ENCODE measurements at regions of chr10 and their contacts with region 1.

Region 1: DNA sequence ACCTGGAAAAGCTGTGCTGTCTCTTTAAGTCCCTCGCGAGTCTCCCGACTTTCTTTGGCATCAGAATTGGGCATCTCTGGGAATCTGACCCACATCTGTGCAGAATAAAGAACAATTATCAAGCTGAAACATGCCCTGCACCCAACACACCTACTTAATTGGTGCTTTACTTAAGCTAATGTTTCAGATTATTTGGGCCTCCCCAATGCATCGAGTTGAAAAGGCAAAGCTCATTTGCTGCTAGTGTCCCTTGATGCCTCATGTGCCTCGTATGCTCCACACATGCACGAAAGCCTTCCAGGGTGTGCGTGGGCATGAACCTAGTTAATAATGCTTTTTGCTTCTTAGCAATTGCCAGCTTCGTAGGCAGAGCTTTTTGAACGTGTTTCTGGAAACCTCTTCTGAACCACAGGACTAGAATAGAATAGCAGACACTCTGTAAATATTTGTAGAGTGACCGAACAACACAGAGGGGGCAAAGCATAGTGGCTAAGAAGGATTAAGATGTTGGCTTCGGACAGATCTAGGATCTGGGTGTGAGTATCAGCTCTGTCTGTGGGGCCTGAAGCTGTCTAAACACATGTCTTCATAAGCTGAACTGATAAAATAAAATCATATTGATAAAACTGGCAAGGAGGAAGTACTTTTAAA is 26.7 kb upstream of the FGFR2 start:
- DNase-seq: peak in 1 of 2 donors; percentile 31
- H3K4me3 ChIP-seq: no peak overlapping the region
- H3K27ac ChIP-seq: peak overlapping the region in 1 of 2 donors; percentile 38
- H3K4me1 ChIP-seq: no peaks in the 10 kb centered on the region
- H3K27me3 ChIP-seq: no peaks in the 10 kb centered on the region
- CTCF ChIP-seq: no peak
- POLR2A ChIP-seq: no peak

Region 2: GRCh38 chr10:121559326-121560026 is 65.5 kb before region 1 on chr10:
- intact Hi-C with region 1: loop called (anchors 2 kb)
- DNase-seq: no peak
- H3K4me3 ChIP-seq: no peak overlapping the region
- H3K27ac ChIP-seq: no peak overlapping the region
- H3K4me1 ChIP-seq: no peaks in the 10 kb centered on the region
- H3K27me3 ChIP-seq: no peaks in the 10 kb centered on the region
- CTCF ChIP-seq: no peak
- POLR2A ChIP-seq: no peak